ENCODE measurements at regions of chr15 and their contacts with region 1.

Region 1: DNA sequence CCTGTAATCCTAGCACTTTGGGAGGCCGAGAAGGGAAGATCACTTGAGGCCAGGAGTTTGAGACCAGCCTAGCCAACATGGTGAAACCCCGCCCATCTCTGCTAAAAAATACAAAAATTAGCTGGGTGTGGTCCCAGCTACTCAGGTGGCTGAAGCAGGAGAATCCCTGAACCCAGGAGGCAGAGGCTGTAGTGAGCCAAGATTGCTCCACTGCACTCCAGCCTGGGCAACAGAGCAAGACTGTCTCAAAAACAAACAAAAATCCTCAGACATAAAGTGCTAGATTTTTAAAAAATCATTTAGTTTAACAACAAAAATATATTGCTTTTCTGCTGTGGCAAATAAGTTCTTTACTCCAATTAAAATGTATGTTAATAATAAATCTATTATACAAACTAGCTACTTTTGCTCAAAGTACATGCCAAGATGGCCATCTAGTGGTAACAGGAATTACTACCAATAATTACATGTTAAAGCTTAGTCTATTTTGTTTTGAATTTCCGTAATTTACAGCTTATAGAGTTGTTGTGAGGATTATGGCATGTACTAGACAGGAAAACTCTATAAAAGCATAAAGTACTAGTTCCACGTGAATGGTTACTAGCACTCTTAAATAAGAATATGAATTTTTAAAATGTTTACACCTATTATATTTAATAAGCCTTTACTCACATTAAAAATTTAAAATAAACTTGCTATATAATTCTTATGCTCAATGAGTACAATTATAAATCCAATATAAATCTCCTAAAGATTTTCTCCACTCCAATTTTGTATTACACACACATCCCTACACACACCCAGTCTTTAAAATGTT is 39.0 kb downstream of the GABPB1 start:
- DNase-seq: peak; percentile 65
- H3K4me3 Mint-ChIP-seq: no peak overlapping the region
- H3K27ac Mint-ChIP-seq: no peak overlapping the region
- H3K4me1 Mint-ChIP-seq: peaks cover 32% of the 10 kb centered on the region
- H3K27me3 Mint-ChIP-seq: no peaks in the 10 kb centered on the region

Region 2: DNA sequence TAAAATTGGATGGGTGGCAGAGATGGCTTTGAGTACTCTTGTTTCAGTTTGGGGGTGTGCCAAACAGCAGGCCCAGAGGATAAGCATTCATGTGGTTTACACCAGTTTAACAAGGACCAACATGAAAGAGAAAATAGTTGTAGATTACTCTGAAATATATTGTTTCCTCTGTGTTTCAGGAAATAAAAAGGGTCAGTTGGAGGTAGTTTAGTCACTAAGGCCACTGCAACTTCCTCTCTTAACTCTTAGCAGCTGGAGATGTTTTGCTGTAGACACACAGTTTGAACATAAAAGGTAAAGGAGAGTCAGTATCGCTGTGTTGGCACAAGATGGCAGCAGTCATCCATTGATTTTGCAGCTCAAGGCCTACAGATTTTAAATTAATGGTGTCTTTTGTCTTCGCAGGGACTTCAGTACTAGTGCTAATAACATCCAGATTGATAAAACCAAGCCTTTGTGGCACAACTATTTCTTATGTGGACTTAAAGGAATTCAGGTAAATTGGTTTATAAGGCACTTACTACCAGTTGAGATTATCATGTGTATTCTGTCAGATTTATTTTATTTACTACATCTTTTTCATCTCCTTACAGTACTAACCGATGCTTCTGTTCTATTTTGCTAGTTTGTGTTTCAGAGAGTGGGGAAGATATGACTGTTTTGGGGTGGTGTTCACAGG is 1080.4 kb before region 1 on chr15:
- intact Hi-C with region 1: loop called (anchors 10 kb)
- DNase-seq: peak; percentile 86
- H3K4me3 Mint-ChIP-seq: no peak overlapping the region
- H3K27ac Mint-ChIP-seq: peak overlapping the region; percentile 11
- H3K4me1 Mint-ChIP-seq: peaks cover 15% of the 10 kb centered on the region
- H3K27me3 Mint-ChIP-seq: no peaks in the 10 kb centered on the region

Region 3: GRCh38 chr15:49876401-49877038 is 439.5 kb before region 1 on chr15:
- intact Hi-C with region 1: loop called (anchors 10 kb)
- DNase-seq: no peak
- H3K4me3 Mint-ChIP-seq: no peak overlapping the region
- H3K27ac Mint-ChIP-seq: no peak overlapping the region
- H3K4me1 Mint-ChIP-seq: no peaks in the 10 kb centered on the region
- H3K27me3 Mint-ChIP-seq: no peaks in the 10 kb centered on the region

Region 4: GRCh38 chr15:50066192-50066591 is 249.8 kb before region 1 on chr15:
- intact Hi-C with region 1: loop called (anchors 10 kb)
- DNase-seq: peak; percentile 80
- H3K4me3 Mint-ChIP-seq: peak overlapping the region; percentile 27
- H3K27ac Mint-ChIP-seq: peak overlapping the region; percentile 91
- H3K4me1 Mint-ChIP-seq: peaks cover 38% of the 10 kb centered on the region
- H3K27me3 Mint-ChIP-seq: no peaks in the 10 kb centered on the region

Region 5: DNA sequence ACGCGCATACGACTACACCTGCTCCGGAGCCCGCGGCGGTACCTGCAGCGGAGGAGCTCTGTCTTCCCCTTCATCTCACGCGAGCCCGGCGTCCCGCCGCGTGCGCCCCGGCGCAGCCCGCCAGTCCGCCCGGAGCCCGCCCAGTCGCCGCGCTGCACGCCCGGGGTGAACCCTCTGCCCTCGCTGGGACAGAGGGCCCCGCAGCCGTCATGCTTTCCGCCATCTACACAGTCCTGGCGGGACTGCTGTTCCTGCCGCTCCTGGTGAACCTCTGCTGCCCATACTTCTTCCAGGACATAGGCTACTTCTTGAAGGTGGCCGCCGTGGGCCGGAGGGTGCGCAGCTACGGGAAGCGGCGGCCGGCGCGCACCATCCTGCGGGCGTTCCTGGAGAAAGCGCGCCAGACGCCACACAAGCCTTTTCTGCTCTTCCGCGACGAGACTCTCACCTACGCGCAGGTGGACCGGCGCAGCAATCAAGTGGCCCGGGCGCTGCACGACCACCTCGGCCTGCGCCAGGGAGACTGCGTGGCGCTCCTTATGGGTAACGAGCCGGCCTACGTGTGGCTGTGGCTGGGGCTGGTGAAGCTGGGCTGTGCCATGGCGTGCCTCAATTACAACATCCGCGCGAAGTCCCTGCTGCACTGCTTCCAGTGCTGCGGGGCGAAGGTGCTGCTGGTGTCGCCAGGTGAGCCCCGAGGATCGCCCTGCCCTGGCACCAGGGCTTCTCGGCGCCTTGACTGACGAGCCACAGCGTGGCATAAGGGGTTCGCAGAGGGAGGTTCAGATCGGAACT is 133.6 kb before region 1 on chr15:
- intact Hi-C with region 1: loop called (anchors 1 kb)
- DNase-seq: peak; percentile 87
- H3K4me3 Mint-ChIP-seq: peak overlapping the region; percentile 98
- H3K27ac Mint-ChIP-seq: peak overlapping the region; percentile 87
- H3K4me1 Mint-ChIP-seq: peaks cover 51% of the 10 kb centered on the region
- H3K27me3 Mint-ChIP-seq: no peaks in the 10 kb centered on the region

Region 6: DNA sequence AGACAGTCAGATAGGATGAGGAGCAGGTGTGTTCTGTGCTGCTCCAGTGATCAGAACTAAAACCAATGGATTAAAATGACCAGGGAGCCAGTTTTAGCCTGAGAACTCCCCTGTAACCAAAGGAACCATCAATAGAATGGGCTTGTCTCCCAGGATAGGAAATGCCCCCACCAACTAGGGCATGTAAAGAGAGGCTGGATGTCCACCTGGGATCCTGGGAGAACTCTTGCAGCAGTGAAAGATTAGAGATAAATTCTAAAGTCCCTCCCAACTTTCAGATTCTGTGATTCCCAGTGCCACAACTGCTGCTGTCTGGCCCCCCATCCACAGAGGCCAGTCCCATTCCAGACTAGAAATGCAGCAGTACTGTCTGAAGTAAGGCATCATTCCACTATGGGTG is 84.3 kb before region 1 on chr15:
- intact Hi-C with region 1: no loop called
- DNase-seq: no peak
- H3K4me3 Mint-ChIP-seq: no peak overlapping the region
- H3K27ac Mint-ChIP-seq: no peak overlapping the region
- H3K4me1 Mint-ChIP-seq: peaks cover 6% of the 10 kb centered on the region
- H3K27me3 Mint-ChIP-seq: no peaks in the 10 kb centered on the region

Region 7: DNA sequence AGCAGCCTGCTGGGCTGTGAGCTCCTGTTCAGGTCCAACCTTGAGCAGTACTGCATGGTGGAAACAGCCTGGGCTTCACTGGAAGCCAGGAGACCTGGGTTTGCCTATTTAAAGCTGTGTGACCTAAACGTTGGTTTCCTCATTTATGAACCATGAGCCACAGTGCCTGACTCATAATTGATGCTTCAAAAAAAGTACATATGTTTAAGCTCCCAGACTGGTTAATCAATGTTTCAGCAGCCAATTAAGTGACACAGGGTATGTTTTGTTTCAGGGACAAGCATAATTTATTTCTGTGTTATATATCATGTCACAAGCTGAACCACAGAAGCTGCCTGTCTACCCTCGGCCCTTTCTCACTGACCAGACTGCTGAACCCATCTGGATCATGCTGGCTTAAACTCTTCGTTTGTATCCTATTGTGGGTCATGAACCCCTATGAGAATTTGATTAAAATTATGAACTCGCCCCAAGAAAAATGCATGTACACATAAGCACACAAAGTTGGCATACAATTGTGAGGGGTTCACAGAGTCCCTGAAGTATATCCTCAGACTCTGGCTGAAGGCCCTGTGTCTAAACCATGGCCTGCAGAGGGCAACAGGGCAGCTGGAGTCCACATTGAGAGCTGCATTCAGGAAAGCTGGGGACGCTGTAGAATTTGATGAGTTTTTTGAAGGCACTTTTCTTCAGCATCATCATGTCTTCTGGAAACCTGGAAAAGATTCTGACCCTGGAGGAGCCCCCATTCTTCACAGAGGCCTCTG is 74.2 kb before region 1 on chr15:
- intact Hi-C with region 1: loop called (anchors 5 kb)
- DNase-seq: no peak
- H3K4me3 Mint-ChIP-seq: peak overlapping the region; percentile 18
- H3K27ac Mint-ChIP-seq: peak overlapping the region; percentile 82
- H3K4me1 Mint-ChIP-seq: peaks cover 27% of the 10 kb centered on the region
- H3K27me3 Mint-ChIP-seq: no peaks in the 10 kb centered on the region